Panc1 (cell line): ENCODE measurements at regions of chr4 and their contacts with region 1.

Region 1: DNA sequence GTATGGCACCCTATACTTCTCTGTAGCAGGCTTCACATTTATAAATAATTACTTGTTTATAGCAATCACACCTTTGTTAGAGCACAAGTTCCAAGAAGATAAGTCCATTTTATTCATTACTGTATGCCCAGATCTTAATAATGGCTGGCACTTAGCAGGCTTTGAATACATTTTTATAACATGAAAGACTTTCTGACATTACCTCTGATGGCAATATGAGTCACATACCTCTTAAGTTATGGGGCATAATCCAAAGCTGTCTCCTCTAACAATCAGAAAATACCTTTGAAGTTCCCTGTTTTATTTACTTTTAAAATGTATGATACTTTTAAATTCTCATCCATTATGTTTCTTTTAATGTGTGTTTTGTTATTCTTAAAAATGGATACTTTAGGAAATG is 12.2 kb downstream of the SCRG1 start:
- DNase-seq: no peak
- ATAC-seq: no peak
- H3K4me3 ChIP-seq: no peak overlapping the region
- H3K27ac ChIP-seq: no peak overlapping the region
- H3K4me1 ChIP-seq: no peaks in the 10 kb centered on the region
- H3K27me3 ChIP-seq: no peaks in the 10 kb centered on the region
- CTCF ChIP-seq: no peak

Region 2: GRCh38 chr4:173111031-173111430 is 275.7 kb before region 1 on chr4:
- CTCF ChIA-PET with region 1: no interaction called
- POLR2A ChIA-PET with region 1: interaction called, 13 read pairs
- in situ Hi-C with region 1: no loop called
- intact Hi-C with region 1: no loop called
- DNase-seq: no peak
- ATAC-seq: no peak
- H3K4me3 ChIP-seq: no peak overlapping the region
- H3K27ac ChIP-seq: no peak overlapping the region
- H3K4me1 ChIP-seq: no peaks in the 10 kb centered on the region
- H3K27me3 ChIP-seq: no peaks in the 10 kb centered on the region
- CTCF ChIP-seq: no peak

Region 3: DNA sequence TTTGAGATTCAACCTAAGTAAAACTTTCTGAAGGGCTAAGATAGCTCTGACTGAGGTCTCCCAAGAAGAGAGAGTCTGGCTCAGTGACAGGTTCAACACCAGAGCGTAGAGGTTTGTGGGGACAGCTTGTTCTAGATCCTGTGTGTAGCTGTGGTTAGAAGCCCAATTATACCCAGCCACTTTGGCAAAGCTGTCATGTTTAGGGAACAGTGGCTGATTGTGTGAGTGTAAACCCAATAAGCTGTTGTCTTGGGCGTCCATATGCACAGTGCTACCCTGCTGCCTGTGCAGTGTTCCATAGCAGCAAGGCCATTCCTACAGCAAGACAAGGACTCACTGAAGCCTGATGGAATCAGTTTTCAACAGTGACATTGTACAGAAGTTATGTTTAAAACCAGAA is 23.3 kb after region 1 on chr4:
- CTCF ChIA-PET with region 1: interaction called, 10 read pairs
- POLR2A ChIA-PET with region 1: no interaction called
- in situ Hi-C with region 1: no loop called
- intact Hi-C with region 1: no loop called
- DNase-seq: no peak
- ATAC-seq: no peak
- H3K4me3 ChIP-seq: no peak overlapping the region
- H3K27ac ChIP-seq: no peak overlapping the region
- H3K4me1 ChIP-seq: no peaks in the 10 kb centered on the region
- H3K27me3 ChIP-seq: no peaks in the 10 kb centered on the region
- CTCF ChIP-seq: no peak